Heart left ventricle (tissue), 16 donors: ENCODE measurements at regions of chr5 and their contacts with region 1.

Region 1: DNA sequence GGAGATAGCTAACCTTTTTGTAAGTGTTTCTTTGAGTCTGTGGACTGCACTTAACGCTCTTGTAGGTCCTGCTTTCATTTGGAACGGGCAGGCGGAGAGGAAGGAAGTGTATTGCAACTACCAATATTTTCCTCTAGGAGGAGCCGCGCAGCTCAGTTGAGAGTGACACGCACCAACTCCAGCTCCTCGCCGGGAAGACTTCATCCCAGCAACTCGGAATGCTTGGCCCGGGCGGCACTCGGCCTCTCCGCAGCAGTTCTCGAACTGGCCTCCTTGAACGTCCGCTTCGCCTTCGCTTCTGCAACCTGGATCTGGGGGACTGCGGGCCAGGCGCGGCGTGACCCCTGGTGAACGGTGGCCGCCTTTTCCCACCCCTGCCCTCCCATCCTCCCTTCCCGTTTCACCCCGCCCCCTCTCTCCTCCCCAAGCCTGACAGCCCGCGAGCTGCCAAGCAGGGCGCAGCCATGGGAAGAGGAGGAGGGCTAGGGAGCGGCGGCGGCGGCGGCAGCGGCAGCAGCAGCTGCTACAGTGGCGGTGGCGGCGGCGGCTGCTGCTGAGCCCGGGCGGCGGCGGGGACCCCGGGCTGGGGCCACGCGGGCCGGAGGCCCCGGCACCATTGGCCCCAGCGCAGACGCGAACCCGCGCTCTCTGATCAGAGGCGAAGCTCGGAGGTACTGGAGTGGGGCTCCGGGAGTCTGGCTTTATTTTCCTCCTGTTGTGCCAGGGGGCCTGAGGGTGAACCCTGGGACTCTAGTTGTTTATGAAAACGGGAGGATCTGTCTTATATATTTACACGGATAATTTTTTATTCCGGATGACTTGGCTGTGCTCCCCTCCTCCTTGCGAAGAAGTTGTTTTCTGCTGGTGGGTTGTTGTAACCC is at the start of gene GHR:
- DNase-seq: peak; percentile 84 to 88 (median 87)
- ATAC-seq: peak; percentile 89 to 95 (median 94)
- H3K4me3 ChIP-seq: peak within 1 kb of the TSS; percentile 52 to 85 (median 70)
- H3K27ac ChIP-seq: peak within 1 kb of the TSS; percentile 54 to 94 (median 84)
- H3K4me1 ChIP-seq: peaks cover 0 to 31% (median 16%) of the 10 kb centered on the region in 12 donors
- H3K27me3 ChIP-seq: peaks cover 0 to 9% (median 0%) of the 10 kb centered on the region in 9 donors
- CTCF ChIP-seq: peak; percentile 62 to 90 (median 82)
- POLR2A ChIP-seq: peak in 1 of 2 donors; percentile 28
- total RNA-seq, gene GHR: 7.5 to 23.2 (median 11.7) TPM

Region 2: DNA sequence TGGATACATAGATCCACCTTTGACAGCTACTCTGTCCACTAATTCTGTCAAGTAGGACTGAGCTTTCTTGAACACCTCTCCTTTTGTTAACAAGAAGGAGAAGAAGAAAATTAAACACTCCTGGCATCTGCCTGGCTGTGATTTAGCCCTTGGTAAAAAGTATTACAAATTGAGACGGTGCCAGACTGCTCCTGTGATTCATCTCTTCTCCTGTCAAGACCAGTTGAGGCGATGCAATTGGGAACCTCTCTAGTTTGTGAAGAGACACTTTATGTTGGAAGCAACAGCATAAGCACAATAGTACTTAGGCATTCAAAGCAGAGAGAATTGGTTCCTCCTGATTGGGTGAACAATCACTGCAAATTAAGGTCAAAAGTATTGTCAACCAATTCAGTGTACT is 72.4 kb after region 1 on chr5:
- intact Hi-C with region 1: loop called in 2 of 10 experiments (anchors 5 to 10 kb)
- DNase-seq: no peak
- ATAC-seq: peak in 3 of 4 donors; percentile 47 to 69 (median 63)
- H3K4me3 ChIP-seq: no peak overlapping the region
- H3K27ac ChIP-seq: no peak overlapping the region
- H3K4me1 ChIP-seq: peaks cover 0 to 48% (median 16%) of the 10 kb centered on the region in 12 donors
- H3K27me3 ChIP-seq: no peaks in the 10 kb centered on the region
- CTCF ChIP-seq: no peak
- POLR2A ChIP-seq: no peak

Region 3: GRCh38 chr5:42514754-42515153 is 91.2 kb after region 1 on chr5:
- intact Hi-C with region 1: loop called in 2 of 10 experiments (anchors 5 to 10 kb)
- DNase-seq: no peak
- ATAC-seq: peak in 2 of 4 donors; percentile 17 to 54
- H3K4me3 ChIP-seq: no peak overlapping the region
- H3K27ac ChIP-seq: no peak overlapping the region
- H3K4me1 ChIP-seq: peaks cover 0 to 47% (median 9%) of the 10 kb centered on the region in 12 donors
- H3K27me3 ChIP-seq: no peaks in the 10 kb centered on the region
- CTCF ChIP-seq: peak in 4 of 12 donors; percentile 15 to 37 (median 24)
- POLR2A ChIP-seq: no peak

Region 4: GRCh38 chr5:42583322-42583721 is 159.8 kb after region 1 on chr5:
- intact Hi-C with region 1: loop called (anchors 1 to 5 kb)
- DNase-seq: peak in 4 of 5 donors; percentile 34 to 62 (median 57)
- ATAC-seq: peak in 3 of 4 donors; percentile 21 to 50 (median 45)
- H3K4me3 ChIP-seq: no peak overlapping the region
- H3K27ac ChIP-seq: no peak overlapping the region
- H3K4me1 ChIP-seq: peaks cover 0 to 47% (median 22%) of the 10 kb centered on the region in 12 donors
- H3K27me3 ChIP-seq: no peaks in the 10 kb centered on the region
- CTCF ChIP-seq: peak; percentile 64 to 93 (median 80)
- POLR2A ChIP-seq: no peak

Region 5: DNA sequence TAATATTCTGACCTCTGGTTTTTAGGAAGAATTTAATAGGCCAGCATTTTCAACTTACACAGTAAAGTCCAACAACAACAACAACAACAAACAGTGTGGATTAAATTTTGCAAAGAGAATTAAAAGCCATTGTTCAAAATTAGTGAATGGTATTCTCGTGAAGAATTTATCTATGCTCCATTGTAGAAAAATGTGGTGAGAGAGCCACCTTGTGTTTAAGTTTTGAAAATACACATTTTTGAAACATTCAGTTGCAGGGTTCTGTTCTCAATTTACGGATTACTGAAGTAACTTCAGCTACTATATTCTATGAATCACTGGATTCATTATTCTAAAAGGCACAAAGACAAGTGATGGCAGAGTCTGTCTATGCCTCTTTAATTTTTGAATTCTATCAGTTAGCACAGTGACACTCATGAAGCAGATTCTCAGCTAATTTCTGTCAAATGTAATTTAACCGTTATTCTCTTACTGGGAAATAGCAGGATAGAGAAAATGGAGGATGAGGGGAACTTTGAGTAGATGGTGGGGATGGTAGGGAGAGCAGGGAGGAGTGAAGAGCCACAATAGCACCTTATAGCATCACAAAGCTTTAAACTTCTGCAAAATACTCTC is 344.1 kb after region 1 on chr5:
- intact Hi-C with region 1: loop called in 8 of 10 experiments (anchors 5 to 10 kb)
- DNase-seq: no peak
- ATAC-seq: peak in 1 of 4 donors; percentile 52
- H3K4me3 ChIP-seq: no peak overlapping the region
- H3K27ac ChIP-seq: no peak overlapping the region
- H3K4me1 ChIP-seq: peaks cover 0 to 4% (median 0%) of the 10 kb centered on the region in 12 donors
- H3K27me3 ChIP-seq: no peaks in the 10 kb centered on the region
- CTCF ChIP-seq: peak; percentile 27 to 71 (median 58)
- POLR2A ChIP-seq: no peak